GM12878 (cell line): ENCODE measurements at regions of chr1 and their contacts with region 1.

Region 1: GRCh38 chr1:181189691-181190363 is 101.3 kb downstream of the IER5 start:
- DNase-seq: no peak
- ATAC-seq: peak; percentile 98
- H3K4me3 ChIP-seq: no peak overlapping the region
- H3K27ac ChIP-seq: no peak overlapping the region
- H3K4me1 ChIP-seq: no peaks in the 10 kb centered on the region
- H3K27me3 ChIP-seq: no peaks in the 10 kb centered on the region
- CTCF ChIP-seq: peak; percentile 95 to 98 (median 97)
- EP300 ChIP-seq: no peak
- POLR2A ChIP-seq: no peak
- RAD21 ChIP-seq: peak; percentile 99

Region 2: GRCh38 chr1:180863158-180863775 is 326.6 kb before region 1 on chr1:
- CTCF ChIA-PET with region 1: no interaction called
- POLR2A ChIA-PET with region 1: no interaction called
- RAD21 ChIA-PET with region 1: no interaction called
- SMC1A ChIA-PET with region 1: no interaction called
- in situ Hi-C with region 1: no loop called
- intact Hi-C with region 1: no loop called
- DNase-seq: no peak
- ATAC-seq: no peak
- H3K4me3 ChIP-seq: no peak overlapping the region
- H3K27ac ChIP-seq: no peak overlapping the region
- H3K4me1 ChIP-seq: no peaks in the 10 kb centered on the region
- H3K27me3 ChIP-seq: no peaks in the 10 kb centered on the region
- CTCF ChIP-seq: peak; percentile 51 to 69 (median 59); a peak in 5 of 6 replicates
- EP300 ChIP-seq: no peak
- POLR2A ChIP-seq: no peak
- RAD21 ChIP-seq: peak; percentile 88

Region 3: GRCh38 chr1:180926164-180926981 is 263.5 kb before region 1 on chr1:
- CTCF ChIA-PET with region 1: no interaction called
- POLR2A ChIA-PET with region 1: no interaction called
- RAD21 ChIA-PET with region 1: no interaction called
- SMC1A ChIA-PET with region 1: no interaction called
- in situ Hi-C with region 1: no loop called
- intact Hi-C with region 1: no loop called
- DNase-seq: no peak
- ATAC-seq: peak; percentile 32
- H3K4me3 ChIP-seq: no peak overlapping the region
- H3K27ac ChIP-seq: no peak overlapping the region
- H3K4me1 ChIP-seq: peaks cover 5% of the 10 kb centered on the region; the same call in 1 of the 2 replicates
- H3K27me3 ChIP-seq: peaks cover 0 to 3% of the 10 kb centered on the region in 2 experiments; a peak in 1 of 4 replicates
- CTCF ChIP-seq: no peak
- EP300 ChIP-seq: no peak
- POLR2A ChIP-seq: no peak
- RAD21 ChIP-seq: no peak

Region 4: GRCh38 chr1:181947441-181947840 is 757.6 kb after region 1 on chr1:
- CTCF ChIA-PET with region 1: no interaction called
- POLR2A ChIA-PET with region 1: no interaction called
- RAD21 ChIA-PET with region 1: no interaction called
- SMC1A ChIA-PET with region 1: no interaction called
- in situ Hi-C with region 1: loop called (anchors 10 kb)
- intact Hi-C with region 1: no loop called
- DNase-seq: no peak
- ATAC-seq: no peak
- H3K4me3 ChIP-seq: no peak overlapping the region
- H3K27ac ChIP-seq: no peak overlapping the region
- H3K4me1 ChIP-seq: no peaks in the 10 kb centered on the region
- H3K27me3 ChIP-seq: no peaks in the 10 kb centered on the region
- CTCF ChIP-seq: no peak
- EP300 ChIP-seq: no peak
- POLR2A ChIP-seq: no peak
- RAD21 ChIP-seq: no peak